CD4-positive, alpha-beta T cell (primary cell): ENCODE measurements at regions of chr11 and their contacts with region 1.

Region 1: GRCh38 chr11:19116971-19117750 is at the start of gene ZDHHC13:
- DNase-seq: peak; percentile 84 to 97 (median 92)
- ATAC-seq: peak; percentile 99
- H3K4me3 ChIP-seq: peak within 1 kb of the TSS; percentile 94
- H3K4me3 Mint-ChIP-seq: peak within 1 kb of the TSS; percentile 92
- H3K27ac ChIP-seq: no peak within 1 kb of the TSS
- H3K27ac Mint-ChIP-seq: peak within 1 kb of the TSS; percentile 80
- H3K4me1 ChIP-seq: peaks cover 29% of the 10 kb centered on the region
- H3K4me1 Mint-ChIP-seq: peaks cover 58% of the 10 kb centered on the region
- H3K27me3 ChIP-seq: no peaks in the 10 kb centered on the region
- H3K27me3 Mint-ChIP-seq: no peaks in the 10 kb centered on the region
- CTCF ChIP-seq: no peak
- total RNA-seq, gene ZDHHC13: 3.6 to 6.6 TPM

Region 2: DNA sequence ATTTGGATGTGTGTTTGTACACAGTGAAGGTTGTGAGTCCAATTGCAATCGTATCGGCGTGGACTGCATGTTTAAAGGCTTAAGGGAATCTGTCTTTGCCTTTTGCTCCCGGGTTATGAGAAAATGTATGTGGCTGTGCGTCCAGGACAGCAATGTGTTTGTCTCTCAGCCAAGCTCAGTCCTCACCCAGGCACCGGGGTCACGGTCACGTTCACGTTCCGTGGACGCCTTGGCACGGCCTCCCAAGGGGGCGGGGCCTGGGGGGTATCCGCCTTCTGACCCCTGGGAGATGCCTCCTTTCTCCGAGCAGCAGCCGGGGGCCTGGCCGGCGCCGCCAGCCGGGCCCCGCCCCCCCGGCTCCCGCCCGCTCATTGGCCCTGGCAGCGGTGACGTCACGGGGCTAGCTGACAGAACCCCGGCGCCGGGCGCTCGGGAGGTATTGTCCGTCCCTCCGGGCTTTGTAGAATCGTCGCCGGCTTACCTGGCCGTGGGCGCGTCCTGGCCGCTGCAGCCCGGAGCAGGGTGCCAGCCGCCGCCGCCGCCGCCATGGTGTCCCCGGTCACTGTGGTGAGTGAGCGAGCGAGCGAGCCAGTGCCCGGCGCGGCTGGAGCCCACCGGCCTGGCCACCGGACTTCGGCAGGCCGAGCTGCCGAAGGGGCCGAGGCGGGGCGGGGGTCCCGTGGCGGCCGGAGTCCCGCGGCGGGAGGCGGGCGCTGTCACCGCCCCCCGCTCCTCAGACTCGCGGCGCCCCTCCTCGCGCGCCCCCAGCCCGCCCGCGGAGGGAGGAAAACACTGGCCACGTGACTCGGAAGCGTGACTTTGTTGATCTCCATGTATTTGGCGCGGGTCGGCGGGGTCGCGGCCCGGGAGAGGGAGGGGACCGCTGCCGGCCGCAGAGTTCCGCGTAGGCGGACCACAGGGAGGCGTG is 418.6 kb before region 1 on chr11 and contains the start of gene TMEM86A:
- CTCF ChIA-PET with region 1: no interaction called
- POLR2A ChIA-PET with region 1: no interaction called
- intact Hi-C with region 1: loop called in 1 of 2 experiments (anchors 5 kb)
- DNase-seq: peak; percentile 78 to 96 (median 88)
- ATAC-seq: peak; percentile 92
- H3K4me3 ChIP-seq: peak within 1 kb of the TSS; percentile 60
- H3K4me3 Mint-ChIP-seq: peak within 1 kb of the TSS; percentile 89
- H3K27ac ChIP-seq: peak within 1 kb of the TSS; percentile 47 to 54
- H3K27ac Mint-ChIP-seq: peak within 1 kb of the TSS; percentile 70
- H3K4me1 ChIP-seq: peaks cover 26% of the 10 kb centered on the region
- H3K4me1 Mint-ChIP-seq: peaks cover 14% of the 10 kb centered on the region
- H3K27me3 ChIP-seq: no peaks in the 10 kb centered on the region
- H3K27me3 Mint-ChIP-seq: no peaks in the 10 kb centered on the region
- CTCF ChIP-seq: no peak
- total RNA-seq, gene TMEM86A: 8.0 to 8.5 TPM

Region 3: GRCh38 chr11:19168090-19168489 is 50.9 kb after region 1 on chr11:
- CTCF ChIA-PET with region 1: no interaction called
- POLR2A ChIA-PET with region 1: no interaction called
- intact Hi-C with region 1: no loop called
- DNase-seq: no peak
- ATAC-seq: no peak
- H3K4me3 ChIP-seq: no peak overlapping the region
- H3K4me3 Mint-ChIP-seq: no peak overlapping the region
- H3K27ac ChIP-seq: no peak overlapping the region
- H3K27ac Mint-ChIP-seq: no peak overlapping the region
- H3K4me1 ChIP-seq: no peaks in the 10 kb centered on the region
- H3K4me1 Mint-ChIP-seq: no peaks in the 10 kb centered on the region
- H3K27me3 ChIP-seq: no peaks in the 10 kb centered on the region
- H3K27me3 Mint-ChIP-seq: no peaks in the 10 kb centered on the region
- CTCF ChIP-seq: no peak

Region 4: GRCh38 chr11:19240420-19241259 is 123.5 kb after region 1 on chr11 and contains the start of gene E2F8:
- CTCF ChIA-PET with region 1: no interaction called
- POLR2A ChIA-PET with region 1: no interaction called
- intact Hi-C with region 1: loop called in 1 of 2 experiments (anchors 2 kb)
- DNase-seq: peak; percentile 54 to 88 (median 70)
- ATAC-seq: peak; percentile 72
- H3K4me3 ChIP-seq: peak within 1 kb of the TSS; percentile 69
- H3K4me3 Mint-ChIP-seq: peak within 1 kb of the TSS; percentile 85
- H3K27ac ChIP-seq: no peak within 1 kb of the TSS
- H3K27ac Mint-ChIP-seq: peak within 1 kb of the TSS; percentile 59
- H3K4me1 ChIP-seq: peaks cover 24% of the 10 kb centered on the region
- H3K4me1 Mint-ChIP-seq: peaks cover 23% of the 10 kb centered on the region
- H3K27me3 ChIP-seq: peaks cover 37 to 43% of the 10 kb centered on the region in 2 experiments
- H3K27me3 Mint-ChIP-seq: peaks cover 52% of the 10 kb centered on the region
- CTCF ChIP-seq: no peak
- total RNA-seq, gene E2F8: not detected

Region 5: GRCh38 chr11:19705936-19706335 is 588.8 kb after region 1 on chr11:
- CTCF ChIA-PET with region 1: no interaction called
- POLR2A ChIA-PET with region 1: no interaction called
- intact Hi-C with region 1: loop called in 1 of 2 experiments (anchors 5 kb)
- DNase-seq: no peak
- ATAC-seq: no peak
- H3K4me3 ChIP-seq: no peak overlapping the region
- H3K4me3 Mint-ChIP-seq: no peak overlapping the region
- H3K27ac ChIP-seq: no peak overlapping the region
- H3K27ac Mint-ChIP-seq: no peak overlapping the region
- H3K4me1 ChIP-seq: no peaks in the 10 kb centered on the region
- H3K4me1 Mint-ChIP-seq: no peaks in the 10 kb centered on the region
- H3K27me3 ChIP-seq: no peaks in the 10 kb centered on the region
- H3K27me3 Mint-ChIP-seq: peaks cover 8% of the 10 kb centered on the region
- CTCF ChIP-seq: no peak